ENCODE measurements at regions of chr9 and their contacts with region 1.

Region 1: DNA sequence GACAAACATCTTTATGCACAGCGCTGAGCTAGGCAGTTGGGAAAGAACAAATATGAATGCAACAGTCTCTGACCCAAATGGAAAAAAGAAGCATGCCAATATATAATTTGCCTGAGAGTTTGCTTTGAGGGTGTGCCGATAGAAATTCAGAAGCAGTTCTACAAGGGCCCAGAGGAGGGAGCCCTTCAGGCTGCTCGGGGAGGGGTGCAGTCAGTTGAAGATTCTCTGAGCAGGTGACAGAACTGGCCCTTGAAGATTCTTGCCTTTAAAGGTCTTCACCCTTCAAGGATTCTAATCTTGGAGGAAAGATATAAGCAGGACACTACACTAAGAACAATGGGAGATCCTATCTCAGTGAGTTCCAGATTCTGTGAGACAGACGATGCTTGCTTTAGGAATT is 3.7 kb upstream of the PAPPA start:
- DNase-seq: no peak
- H3K4me3 ChIP-seq: no peak overlapping the region
- H3K27ac ChIP-seq: no peak overlapping the region
- H3K4me1 ChIP-seq: no peaks in the 10 kb centered on the region
- H3K27me3 ChIP-seq: peaks cover 5% of the 10 kb centered on the region
- CTCF ChIP-seq: peak in 2 of 4 experiments; percentile 32 to 33
- POLR2A ChIP-seq: no peak

Region 2: GRCh38 chr9:116365056-116365471 is 215.2 kb after region 1 on chr9:
- intact Hi-C with region 1: loop called (anchors 10 kb)
- DNase-seq: peak; percentile 33
- H3K4me3 ChIP-seq: no peak overlapping the region
- H3K27ac ChIP-seq: peak overlapping the region in 1 of 2 donors; percentile 20
- H3K4me1 ChIP-seq: no peaks in the 10 kb centered on the region
- H3K27me3 ChIP-seq: no peaks in the 10 kb centered on the region
- CTCF ChIP-seq: peak in 1 of 4 experiments; percentile 16
- POLR2A ChIP-seq: no peak

Region 3: DNA sequence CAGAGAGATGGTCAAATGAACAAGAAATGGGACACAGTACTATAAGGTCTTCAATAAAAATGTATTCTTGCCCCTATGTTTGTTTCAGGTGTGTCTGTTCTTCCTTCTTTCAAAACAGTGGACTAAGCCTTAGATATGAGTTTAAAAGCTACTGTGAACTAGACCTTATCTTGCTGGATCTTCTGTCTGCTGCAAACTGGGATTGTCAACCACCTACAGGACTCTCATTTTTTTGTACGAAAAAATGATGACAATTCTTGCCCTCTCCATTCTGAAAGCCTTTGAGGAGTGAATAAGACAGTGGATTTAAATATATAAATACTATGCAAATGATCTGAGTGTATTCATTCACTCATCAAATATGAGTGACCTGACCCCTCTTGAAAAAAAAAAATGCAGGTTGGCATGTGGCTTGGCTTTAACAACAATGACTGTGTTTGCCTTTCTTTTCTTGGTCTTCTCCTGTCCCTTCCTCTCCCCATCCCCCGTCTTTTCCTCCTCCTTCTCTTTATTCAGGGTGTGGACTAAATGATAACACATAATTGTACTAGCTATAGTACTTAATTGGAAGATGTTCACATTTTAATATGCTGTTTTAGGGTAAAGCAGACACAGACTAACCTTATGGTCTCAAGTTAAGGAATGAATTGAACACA is 301.8 kb after region 1 on chr9:
- intact Hi-C with region 1: no loop called
- DNase-seq: no peak
- H3K4me3 ChIP-seq: no peak overlapping the region
- H3K27ac ChIP-seq: no peak overlapping the region
- H3K4me1 ChIP-seq: peaks cover 9% of the 10 kb centered on the region
- H3K27me3 ChIP-seq: no peaks in the 10 kb centered on the region
- CTCF ChIP-seq: no peak
- POLR2A ChIP-seq: no peak

Region 4: GRCh38 chr9:116494815-116495634 is 345.2 kb after region 1 on chr9:
- intact Hi-C with region 1: loop called (anchors 10 kb)
- DNase-seq: no peak
- H3K4me3 ChIP-seq: no peak overlapping the region
- H3K27ac ChIP-seq: no peak overlapping the region
- H3K4me1 ChIP-seq: no peaks in the 10 kb centered on the region
- H3K27me3 ChIP-seq: no peaks in the 10 kb centered on the region
- CTCF ChIP-seq: peak; percentile 25 to 56 (median 26)
- POLR2A ChIP-seq: no peak

Region 5: DNA sequence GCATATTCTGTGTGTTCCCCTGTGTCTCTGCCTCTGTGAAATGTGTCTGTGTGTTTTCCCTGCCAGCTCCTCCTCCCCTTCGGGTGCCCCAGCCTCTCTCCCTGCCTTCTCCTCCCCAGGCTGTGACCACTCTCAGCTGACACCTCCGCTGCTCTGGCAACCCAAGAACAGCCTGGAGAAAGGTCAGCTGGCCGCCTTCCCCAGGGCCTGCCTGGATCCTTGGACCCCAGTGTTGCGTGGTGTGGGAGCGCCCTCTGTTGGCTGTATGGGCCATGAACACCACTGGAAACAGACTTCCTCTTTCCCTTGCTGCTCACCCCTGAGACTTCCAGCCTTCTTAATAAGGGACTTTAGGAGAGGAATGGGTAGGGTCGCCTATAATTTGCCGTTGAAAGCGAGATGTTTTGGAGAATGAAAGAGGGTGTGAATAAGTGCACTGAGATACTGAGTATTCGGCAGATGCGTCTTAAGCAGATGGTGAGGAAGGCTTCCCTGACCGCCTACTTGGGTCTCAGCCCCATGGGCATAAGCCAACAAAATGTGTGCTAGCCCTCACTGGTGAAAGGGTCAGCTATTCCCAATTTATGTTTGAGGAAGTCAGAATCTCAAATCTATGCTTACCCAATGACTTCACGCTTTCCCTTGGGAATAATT is 422.4 kb after region 1 on chr9:
- intact Hi-C with region 1: loop called (anchors 5 kb)
- DNase-seq: no peak
- H3K4me3 ChIP-seq: no peak overlapping the region
- H3K27ac ChIP-seq: no peak overlapping the region
- H3K4me1 ChIP-seq: no peaks in the 10 kb centered on the region
- H3K27me3 ChIP-seq: no peaks in the 10 kb centered on the region
- CTCF ChIP-seq: peak; percentile 28 to 66 (median 58)
- POLR2A ChIP-seq: no peak

Region 6: DNA sequence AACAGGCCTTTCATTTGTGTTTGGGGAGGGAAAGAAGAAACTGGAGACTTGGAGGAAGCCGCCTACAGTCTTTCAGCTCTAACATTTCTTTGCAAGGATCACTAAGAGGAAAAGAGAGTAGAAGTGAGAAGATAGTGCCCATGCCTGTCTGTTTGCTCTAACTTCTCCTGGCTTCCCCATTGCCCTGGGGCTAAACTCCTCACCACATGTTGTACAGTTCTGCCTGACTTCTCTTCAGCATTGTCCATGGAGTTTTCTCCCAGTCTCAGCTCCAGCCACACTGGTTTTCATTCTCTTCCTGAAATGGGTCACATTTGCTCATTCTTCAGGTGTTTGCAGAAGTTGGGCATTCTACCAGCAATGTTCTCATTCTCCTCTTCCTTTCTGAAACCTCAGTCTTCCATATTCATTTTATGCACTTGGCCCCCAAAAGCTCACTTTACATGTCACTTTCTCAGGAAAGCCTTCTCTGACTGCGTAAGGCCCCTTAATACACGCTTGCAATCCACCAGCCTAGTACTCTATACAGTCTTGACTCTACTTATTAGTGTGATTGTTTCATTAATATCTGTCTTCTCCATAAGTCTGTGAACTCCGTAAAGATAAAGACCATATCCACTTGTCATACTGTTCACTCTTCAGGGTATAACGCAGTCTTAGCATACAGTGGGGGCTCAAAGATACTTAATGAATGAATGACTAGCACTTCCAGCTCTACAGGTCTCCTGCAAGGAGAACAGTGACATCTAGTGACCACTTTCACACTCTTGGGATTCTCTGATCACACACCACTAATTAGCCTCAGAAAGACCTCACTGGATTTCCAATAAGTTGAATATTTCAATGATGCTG is 497.0 kb after region 1 on chr9:
- intact Hi-C with region 1: loop called (anchors 2 kb)
- DNase-seq: no peak
- H3K4me3 ChIP-seq: no peak overlapping the region
- H3K27ac ChIP-seq: no peak overlapping the region
- H3K4me1 ChIP-seq: no peaks in the 10 kb centered on the region
- H3K27me3 ChIP-seq: no peaks in the 10 kb centered on the region
- CTCF ChIP-seq: peak in 3 of 4 experiments; percentile 31 to 39 (median 32)
- POLR2A ChIP-seq: no peak